ENCODE measurements at regions of chrX and their contacts with region 1.

Region 1: GRCh38 chrX:133670383-133670782 is 255.1 kb upstream of the GPC4 start:
- DNase-seq: no peak
- H3K4me3 ChIP-seq: no peak overlapping the region
- H3K27ac ChIP-seq: peak overlapping the region in 2 of 4 donors; percentile 33 to 60
- H3K4me1 ChIP-seq: peaks cover 0 to 43% (median 24%) of the 10 kb centered on the region in 4 donors
- H3K27me3 ChIP-seq: no peaks in the 10 kb centered on the region
- CTCF ChIP-seq: peak; percentile 64 to 72 (median 70)
- EP300 ChIP-seq: no peak
- POLR2A ChIP-seq: no peak

Region 2: DNA sequence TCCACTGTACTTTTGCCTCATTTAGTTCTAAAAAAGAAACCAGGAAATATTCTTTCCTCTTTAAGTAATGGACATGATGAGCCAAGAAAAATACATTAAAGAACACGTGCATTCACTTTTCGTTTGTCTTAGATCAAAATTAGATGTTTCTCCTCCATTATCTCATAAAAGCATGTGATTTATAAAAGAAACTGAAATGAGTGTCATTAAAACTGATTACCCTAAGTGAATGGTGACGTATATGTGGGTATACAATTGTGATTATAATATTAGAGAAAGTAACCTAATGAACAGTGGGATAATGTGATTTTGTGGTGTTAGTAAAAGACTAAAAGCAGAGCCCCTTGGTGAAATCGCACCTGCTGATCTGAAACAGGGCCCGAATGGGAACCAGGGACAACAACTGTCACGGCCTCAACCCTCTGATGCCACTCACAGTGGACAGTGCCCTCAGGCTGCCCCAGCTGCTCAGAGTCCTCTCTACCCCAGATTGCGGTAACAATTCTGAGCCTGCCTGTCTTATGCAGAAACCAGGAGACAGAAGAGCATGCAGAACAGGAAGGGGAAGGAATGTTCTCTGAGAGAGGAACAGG is 686.2 kb before region 1 on chrX:
- intact Hi-C with region 1: loop called (anchors 5 kb)
- DNase-seq: no peak
- H3K4me3 ChIP-seq: no peak overlapping the region
- H3K27ac ChIP-seq: no peak overlapping the region
- H3K4me1 ChIP-seq: no peaks in the 10 kb centered on the region
- H3K27me3 ChIP-seq: no peaks in the 10 kb centered on the region
- CTCF ChIP-seq: no peak
- EP300 ChIP-seq: no peak
- POLR2A ChIP-seq: no peak

Region 3: DNA sequence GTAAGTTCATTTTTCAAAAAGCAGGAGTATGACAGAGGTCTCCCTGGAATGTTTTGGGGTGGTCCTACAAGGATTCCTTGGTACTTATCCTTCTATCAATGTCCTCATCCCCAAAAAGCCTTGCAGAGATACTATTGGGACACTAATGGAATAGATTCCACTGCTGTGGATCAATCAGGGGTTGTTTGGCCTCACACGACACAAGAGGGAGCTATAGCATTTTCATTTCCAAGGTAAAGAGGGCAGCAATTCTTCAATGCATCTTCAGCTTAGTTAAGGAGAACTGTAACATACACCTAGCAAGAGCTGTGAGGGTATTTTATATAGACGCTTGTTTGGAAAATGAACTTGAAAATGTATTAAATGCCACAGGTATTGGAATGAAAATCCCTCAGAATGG is 624.4 kb before region 1 on chrX:
- intact Hi-C with region 1: loop called (anchors 10 kb)
- DNase-seq: no peak
- H3K4me3 ChIP-seq: no peak overlapping the region
- H3K27ac ChIP-seq: no peak overlapping the region
- H3K4me1 ChIP-seq: no peaks in the 10 kb centered on the region
- H3K27me3 ChIP-seq: peaks cover 0 to 4% (median 0%) of the 10 kb centered on the region in 4 donors
- CTCF ChIP-seq: peak; percentile 22 to 41 (median 30)
- EP300 ChIP-seq: no peak
- POLR2A ChIP-seq: no peak

Region 4: DNA sequence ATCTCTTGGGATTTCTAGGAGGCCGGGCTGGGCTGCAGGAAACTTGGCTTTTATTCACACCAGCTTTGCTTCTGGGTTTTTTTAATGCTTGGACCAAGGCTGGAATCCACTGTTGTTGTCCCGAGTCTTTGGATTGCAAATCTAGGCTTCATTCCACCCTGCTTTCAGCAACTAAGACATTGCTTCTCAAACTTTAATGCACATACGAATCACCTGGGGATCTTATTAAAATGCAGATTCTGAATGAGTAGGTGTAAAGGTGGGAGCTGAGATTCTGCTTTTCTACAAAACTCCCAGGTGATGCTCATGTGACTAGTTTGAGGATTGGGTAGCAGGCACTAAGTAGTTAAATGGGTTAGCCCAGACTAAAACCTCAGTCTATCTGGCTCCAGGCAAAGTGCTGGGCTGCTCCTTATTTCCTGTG is 215.9 kb before region 1 on chrX:
- intact Hi-C with region 1: no loop called
- DNase-seq: no peak
- H3K4me3 ChIP-seq: no peak overlapping the region
- H3K27ac ChIP-seq: no peak overlapping the region
- H3K4me1 ChIP-seq: no peaks in the 10 kb centered on the region
- H3K27me3 ChIP-seq: peaks cover 0 to 7% (median 0%) of the 10 kb centered on the region in 4 donors
- CTCF ChIP-seq: no peak
- EP300 ChIP-seq: no peak
- POLR2A ChIP-seq: no peak

Measured in esophagus muscularis mucosa (tissue), 4 donors.